Activated B cell treated with CpG ODN at 0.5 μM for 24 hours (primary cell): ENCODE measurements at regions of chr5 and their contacts with region 1.

Region 1: GRCh38 chr5:6737023-6737941 is 24.1 kb downstream of the TENT4A start:
- DNase-seq: no peak
- ATAC-seq: peak; percentile 66
- H3K4me3 Mint-ChIP-seq: peak overlapping the region; percentile 60
- H3K27ac Mint-ChIP-seq: peak overlapping the region; percentile 88
- H3K4me1 Mint-ChIP-seq: peaks cover 60% of the 10 kb centered on the region
- H3K27me3 Mint-ChIP-seq: no peaks in the 10 kb centered on the region
- CTCF ChIP-seq: no peak

Region 2: DNA sequence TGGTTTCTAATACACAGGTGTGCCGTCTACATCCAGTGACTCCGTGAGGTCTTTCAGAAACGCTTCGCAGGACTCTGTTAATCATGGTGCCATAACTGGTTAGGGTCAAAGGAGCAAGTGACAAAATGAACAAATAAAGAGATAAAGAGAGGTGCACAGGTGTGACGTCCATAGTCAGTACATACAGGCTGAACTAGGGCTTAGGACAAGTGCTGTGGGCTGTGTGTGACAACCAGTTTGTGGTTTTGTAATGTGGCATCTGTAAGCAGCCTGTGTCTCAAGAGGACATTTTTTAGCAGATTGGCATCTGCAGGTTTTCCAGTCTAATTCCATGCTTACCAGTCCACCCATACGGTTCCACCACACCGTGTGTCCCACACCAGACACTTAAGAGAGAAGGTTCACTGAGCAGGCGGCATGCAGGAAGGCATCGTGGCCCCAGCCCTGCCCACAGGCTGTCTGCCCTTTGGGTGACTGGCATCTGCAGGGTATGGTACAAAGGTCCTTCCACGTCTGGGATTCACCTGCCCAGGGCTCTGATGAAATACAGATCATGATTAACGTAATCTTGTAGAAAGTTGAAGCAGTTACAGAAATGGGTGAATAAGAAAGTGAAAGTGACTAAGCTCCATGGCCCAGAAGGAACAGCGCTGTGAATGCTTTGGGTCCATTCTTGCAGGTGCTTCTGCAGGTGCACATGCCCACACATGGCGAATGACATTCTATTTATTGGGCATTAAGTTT is 77.2 kb before region 1 on chr5:
- CTCF ChIA-PET with region 1: no interaction called
- POLR2A ChIA-PET with region 1: interaction called, 4 read pairs
- intact Hi-C with region 1: loop called (anchors 1 kb)
- DNase-seq: peak; percentile 35
- ATAC-seq: peak; percentile 78
- H3K4me3 Mint-ChIP-seq: peak overlapping the region; percentile 80
- H3K27ac Mint-ChIP-seq: peak overlapping the region; percentile 96
- H3K4me1 Mint-ChIP-seq: peaks cover 31% of the 10 kb centered on the region
- H3K27me3 Mint-ChIP-seq: no peaks in the 10 kb centered on the region
- CTCF ChIP-seq: no peak

Region 3: GRCh38 chr5:6722015-6722414 is 15.3 kb before region 1 on chr5:
- CTCF ChIA-PET with region 1: interaction called, 4 read pairs
- POLR2A ChIA-PET with region 1: interaction called, 16 read pairs
- intact Hi-C with region 1: no loop called
- DNase-seq: no peak
- ATAC-seq: peak; percentile 65
- H3K4me3 Mint-ChIP-seq: peak overlapping the region; percentile 83
- H3K27ac Mint-ChIP-seq: peak overlapping the region; percentile 94
- H3K4me1 Mint-ChIP-seq: peaks cover 89% of the 10 kb centered on the region
- H3K27me3 Mint-ChIP-seq: no peaks in the 10 kb centered on the region
- CTCF ChIP-seq: no peak

Region 4: GRCh38 chr5:6765612-6766525 is 28.6 kb after region 1 on chr5:
- CTCF ChIA-PET with region 1: no interaction called
- POLR2A ChIA-PET with region 1: no interaction called
- intact Hi-C with region 1: no loop called
- DNase-seq: no peak
- ATAC-seq: peak; percentile 47
- H3K4me3 Mint-ChIP-seq: no peak overlapping the region
- H3K27ac Mint-ChIP-seq: no peak overlapping the region
- H3K4me1 Mint-ChIP-seq: no peaks in the 10 kb centered on the region
- H3K27me3 Mint-ChIP-seq: peaks cover 3% of the 10 kb centered on the region
- CTCF ChIP-seq: no peak